PC-9 (cell line): ENCODE measurements at regions of chr5 and their contacts with region 1.

Region 1: DNA sequence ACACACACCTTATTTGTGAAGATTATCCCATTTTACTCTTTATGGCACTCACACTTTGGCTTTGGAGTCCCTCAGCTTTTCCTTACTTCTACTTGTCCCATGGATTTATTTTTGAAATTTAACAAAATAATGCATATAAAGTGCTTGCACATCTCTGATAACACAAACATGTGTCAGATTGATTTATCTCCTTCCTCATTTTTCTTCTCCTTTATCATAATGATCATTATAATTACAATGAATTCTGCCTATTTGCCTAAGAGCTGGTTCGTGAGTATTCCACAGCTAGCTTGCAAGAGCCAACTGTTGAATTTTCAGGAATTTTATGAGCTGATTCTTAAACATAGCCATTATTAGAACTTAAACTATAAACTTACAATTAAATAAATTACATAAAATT is 347.7 kb downstream of the CHSY3 start:
- DNase-seq: no peak
- H3K4me3 ChIP-seq: no peak overlapping the region
- H3K27ac ChIP-seq: no peak overlapping the region
- H3K4me1 ChIP-seq: no peaks in the 10 kb centered on the region
- H3K27me3 ChIP-seq: no peaks in the 10 kb centered on the region
- CTCF ChIP-seq: no peak

Region 2: DNA sequence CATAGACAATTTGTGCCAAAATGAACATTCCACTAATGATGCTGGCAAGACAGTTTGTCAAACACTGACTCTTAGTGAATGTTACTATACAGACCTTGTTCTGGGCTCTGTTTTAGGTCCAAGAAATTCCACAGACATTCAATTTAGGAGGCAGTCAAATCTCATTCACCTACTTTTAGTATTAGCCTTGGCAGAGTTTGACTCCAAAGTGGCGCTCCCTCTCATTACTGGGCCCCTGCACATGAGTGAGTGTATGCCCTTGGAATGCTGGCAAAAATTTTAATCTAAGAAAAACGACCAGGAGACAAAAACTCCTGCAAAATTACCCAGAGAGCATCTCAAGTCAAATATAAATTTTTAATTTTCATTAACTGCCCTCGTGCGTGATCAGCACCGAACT is 1381.6 kb before region 1 on chr5:
- CTCF ChIA-PET with region 1: no interaction called
- POLR2A ChIA-PET with region 1: no interaction called
- intact Hi-C with region 1: no loop called
- DNase-seq: no peak
- H3K4me3 ChIP-seq: no peak overlapping the region
- H3K27ac ChIP-seq: no peak overlapping the region
- H3K4me1 ChIP-seq: no peaks in the 10 kb centered on the region
- H3K27me3 ChIP-seq: no peaks in the 10 kb centered on the region
- CTCF ChIP-seq: no peak

Region 3: GRCh38 chr5:130605234-130605633 is 353.3 kb after region 1 on chr5:
- CTCF ChIA-PET with region 1: no interaction called
- POLR2A ChIA-PET with region 1: interaction called, 12 read pairs
- intact Hi-C with region 1: no loop called
- DNase-seq: peak; percentile 46 to 61
- H3K4me3 ChIP-seq: no peak overlapping the region
- H3K27ac ChIP-seq: peak overlapping the region; percentile 47
- H3K4me1 ChIP-seq: peaks cover 10% of the 10 kb centered on the region
- H3K27me3 ChIP-seq: no peaks in the 10 kb centered on the region
- CTCF ChIP-seq: no peak

Region 4: DNA sequence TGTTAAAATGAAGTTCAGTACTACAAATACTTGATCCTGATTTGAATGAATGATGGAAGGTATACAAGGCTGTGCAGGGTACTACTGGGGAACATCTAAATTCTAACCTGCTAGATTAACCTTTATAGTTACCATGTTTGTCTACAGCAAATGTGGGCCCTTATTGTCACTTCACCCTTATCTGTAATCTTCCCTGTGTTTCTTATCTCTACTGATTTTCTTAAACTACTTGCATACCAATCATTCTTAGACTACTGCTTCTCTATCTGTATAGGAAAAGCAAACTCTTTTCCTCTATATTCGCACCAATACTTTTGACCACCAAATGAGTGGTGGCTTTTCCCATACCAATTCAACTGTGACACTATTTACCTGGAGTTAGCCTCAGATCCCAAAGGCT is 702.4 kb after region 1 on chr5:
- CTCF ChIA-PET with region 1: no interaction called
- POLR2A ChIA-PET with region 1: no interaction called
- intact Hi-C with region 1: no loop called
- DNase-seq: no peak
- H3K4me3 ChIP-seq: no peak overlapping the region
- H3K27ac ChIP-seq: no peak overlapping the region
- H3K4me1 ChIP-seq: no peaks in the 10 kb centered on the region
- H3K27me3 ChIP-seq: no peaks in the 10 kb centered on the region
- CTCF ChIP-seq: no peak